Naive thymus-derived CD4-positive, alpha-beta T cell (primary cell): ENCODE measurements at regions of chr5 and their contacts with region 1.

Region 1: DNA sequence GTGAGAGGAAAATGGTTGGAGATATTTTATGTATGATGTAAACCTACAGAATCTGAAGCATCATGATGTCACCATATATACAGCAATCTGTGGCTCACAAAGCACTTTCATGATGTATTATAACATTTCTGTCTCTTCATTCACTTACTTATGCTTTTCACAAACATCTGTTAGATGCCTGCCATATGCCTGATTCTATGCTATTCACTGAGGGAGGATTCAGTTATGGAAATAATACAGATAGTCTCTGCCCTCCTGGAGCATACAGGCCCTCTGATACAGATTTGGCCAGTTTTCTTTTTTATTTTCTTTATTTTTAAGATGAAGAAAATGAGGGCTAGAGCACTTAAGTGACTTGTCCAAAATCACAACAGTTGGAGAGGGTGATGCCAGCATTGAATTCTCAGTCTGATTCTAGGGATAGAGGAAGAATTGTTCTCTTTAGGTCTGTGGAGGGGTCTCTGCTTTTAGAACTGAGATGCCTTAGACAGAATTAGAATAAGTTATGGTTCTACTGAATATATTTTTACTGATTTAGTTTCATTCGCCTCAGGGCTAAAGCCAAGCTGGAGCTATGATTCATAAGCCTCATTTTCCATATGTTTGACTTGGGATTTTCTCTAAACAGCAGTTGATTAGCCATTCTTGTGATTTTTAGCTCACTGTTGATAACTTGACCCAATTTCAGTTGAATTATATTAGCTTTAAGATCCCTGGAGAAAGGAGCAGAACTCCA is 636.4 kb downstream of the PRELID2 start:
- DNase-seq: no peak
- ATAC-seq: no peak
- H3K4me3 ChIP-seq: no peak overlapping the region
- H3K4me3 Mint-ChIP-seq: no peak overlapping the region
- H3K27ac ChIP-seq: no peak overlapping the region
- H3K27ac Mint-ChIP-seq: no peak overlapping the region
- H3K4me1 ChIP-seq: no peaks in the 10 kb centered on the region
- H3K4me1 Mint-ChIP-seq: no peaks in the 10 kb centered on the region
- H3K27me3 ChIP-seq: no peaks in the 10 kb centered on the region
- H3K27me3 Mint-ChIP-seq: no peaks in the 10 kb centered on the region

Region 2: GRCh38 chr5:145015146-145015545 is 183.5 kb before region 1 on chr5:
- CTCF ChIA-PET with region 1: no interaction called
- POLR2A ChIA-PET with region 1: no interaction called
- intact Hi-C with region 1: no loop called
- DNase-seq: no peak
- ATAC-seq: no peak
- H3K4me3 ChIP-seq: no peak overlapping the region
- H3K4me3 Mint-ChIP-seq: no peak overlapping the region
- H3K27ac ChIP-seq: no peak overlapping the region
- H3K27ac Mint-ChIP-seq: no peak overlapping the region
- H3K4me1 ChIP-seq: no peaks in the 10 kb centered on the region
- H3K4me1 Mint-ChIP-seq: no peaks in the 10 kb centered on the region
- H3K27me3 ChIP-seq: no peaks in the 10 kb centered on the region
- H3K27me3 Mint-ChIP-seq: no peaks in the 10 kb centered on the region

Region 3: DNA sequence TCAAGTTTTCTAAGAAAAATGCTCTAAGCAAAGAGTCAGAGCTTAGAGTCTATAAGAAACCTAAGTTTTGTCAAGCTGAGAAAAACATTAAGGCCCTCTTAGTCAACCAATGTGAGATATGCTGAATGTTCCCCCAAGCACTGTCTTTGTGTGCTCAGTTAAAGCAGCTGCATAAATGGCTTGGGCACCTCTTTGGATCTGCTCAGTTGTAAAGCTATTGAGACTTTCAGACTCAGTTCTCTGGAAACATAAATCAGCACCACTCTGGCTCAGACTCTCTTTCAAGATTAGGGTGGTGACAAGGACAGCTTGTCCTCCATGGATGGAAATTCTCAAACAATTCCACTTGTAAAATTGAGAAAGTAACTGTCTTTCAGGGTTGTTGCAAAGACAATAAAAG is 171.4 kb before region 1 on chr5:
- CTCF ChIA-PET with region 1: no interaction called
- POLR2A ChIA-PET with region 1: no interaction called
- intact Hi-C with region 1: no loop called
- DNase-seq: no peak
- ATAC-seq: no peak
- H3K4me3 ChIP-seq: no peak overlapping the region
- H3K4me3 Mint-ChIP-seq: no peak overlapping the region
- H3K27ac ChIP-seq: no peak overlapping the region
- H3K27ac Mint-ChIP-seq: no peak overlapping the region
- H3K4me1 ChIP-seq: no peaks in the 10 kb centered on the region
- H3K4me1 Mint-ChIP-seq: no peaks in the 10 kb centered on the region
- H3K27me3 ChIP-seq: no peaks in the 10 kb centered on the region
- H3K27me3 Mint-ChIP-seq: no peaks in the 10 kb centered on the region

Region 4: DNA sequence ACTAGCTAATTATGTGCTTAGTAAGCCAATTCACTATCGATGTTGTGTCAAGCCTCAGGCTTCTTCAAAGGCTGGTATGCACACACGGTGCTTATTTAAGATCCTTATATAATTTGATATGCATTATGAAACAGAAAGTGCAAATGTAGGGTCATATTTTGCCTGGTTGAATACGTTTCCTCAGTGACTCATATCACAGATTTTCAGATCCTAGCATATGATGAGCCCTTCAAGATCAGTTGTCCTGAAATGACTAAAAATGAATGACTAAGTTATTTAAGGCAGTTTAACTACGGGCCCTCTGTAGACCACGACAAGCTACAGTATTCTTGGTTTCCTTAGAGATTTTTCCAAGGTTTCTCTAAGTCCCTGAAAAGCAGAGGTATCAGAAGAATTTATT is 141.9 kb before region 1 on chr5:
- CTCF ChIA-PET with region 1: no interaction called
- POLR2A ChIA-PET with region 1: no interaction called
- intact Hi-C with region 1: no loop called
- DNase-seq: no peak
- ATAC-seq: no peak
- H3K4me3 ChIP-seq: no peak overlapping the region
- H3K4me3 Mint-ChIP-seq: no peak overlapping the region
- H3K27ac ChIP-seq: no peak overlapping the region
- H3K27ac Mint-ChIP-seq: no peak overlapping the region
- H3K4me1 ChIP-seq: no peaks in the 10 kb centered on the region
- H3K4me1 Mint-ChIP-seq: no peaks in the 10 kb centered on the region
- H3K27me3 ChIP-seq: no peaks in the 10 kb centered on the region
- H3K27me3 Mint-ChIP-seq: no peaks in the 10 kb centered on the region

Region 5: DNA sequence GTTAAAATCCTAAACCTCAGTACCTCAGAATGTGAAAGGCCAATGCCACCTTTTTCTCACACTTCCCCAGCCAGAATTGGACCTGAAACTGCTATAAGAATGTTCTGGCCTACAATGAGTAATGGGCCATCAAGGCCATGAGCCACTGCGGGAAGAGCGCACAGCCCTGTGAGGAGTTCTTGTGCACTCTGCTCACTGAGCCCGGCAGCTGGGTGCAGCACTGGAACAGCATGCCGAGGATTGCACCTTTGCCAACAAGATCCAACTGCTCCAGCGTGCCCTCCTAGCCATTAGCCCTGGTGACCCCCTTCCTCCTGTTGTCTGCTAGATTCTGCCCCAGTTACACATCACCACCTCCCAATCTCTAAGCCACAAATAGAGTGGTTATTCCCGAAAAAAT is 121.7 kb before region 1 on chr5:
- CTCF ChIA-PET with region 1: no interaction called
- POLR2A ChIA-PET with region 1: no interaction called
- intact Hi-C with region 1: no loop called
- DNase-seq: no peak
- ATAC-seq: no peak
- H3K4me3 ChIP-seq: no peak overlapping the region
- H3K4me3 Mint-ChIP-seq: no peak overlapping the region
- H3K27ac ChIP-seq: no peak overlapping the region
- H3K27ac Mint-ChIP-seq: no peak overlapping the region
- H3K4me1 ChIP-seq: no peaks in the 10 kb centered on the region
- H3K4me1 Mint-ChIP-seq: no peaks in the 10 kb centered on the region
- H3K27me3 ChIP-seq: no peaks in the 10 kb centered on the region
- H3K27me3 Mint-ChIP-seq: no peaks in the 10 kb centered on the region

Region 6: GRCh38 chr5:145316282-145316681 is 117.6 kb after region 1 on chr5:
- CTCF ChIA-PET with region 1: no interaction called
- POLR2A ChIA-PET with region 1: no interaction called
- intact Hi-C with region 1: loop called in 1 of 2 experiments (anchors 10 kb)
- DNase-seq: no peak
- ATAC-seq: no peak
- H3K4me3 ChIP-seq: no peak overlapping the region
- H3K4me3 Mint-ChIP-seq: no peak overlapping the region
- H3K27ac ChIP-seq: no peak overlapping the region
- H3K27ac Mint-ChIP-seq: no peak overlapping the region
- H3K4me1 ChIP-seq: no peaks in the 10 kb centered on the region
- H3K4me1 Mint-ChIP-seq: no peaks in the 10 kb centered on the region
- H3K27me3 ChIP-seq: no peaks in the 10 kb centered on the region
- H3K27me3 Mint-ChIP-seq: no peaks in the 10 kb centered on the region